PC-9 (cell line): ENCODE measurements at regions of chr14 and their contacts with region 1.

Region 1: GRCh38 chr14:76386915-76387782 is 11.2 kb downstream of the ESRRB start:
- DNase-seq: peak; percentile 55 to 87
- H3K4me3 ChIP-seq: no peak overlapping the region
- H3K27ac ChIP-seq: no peak overlapping the region
- H3K4me1 ChIP-seq: no peaks in the 10 kb centered on the region
- H3K27me3 ChIP-seq: peaks cover 97% of the 10 kb centered on the region
- CTCF ChIP-seq: peak; percentile 100

Region 2: DNA sequence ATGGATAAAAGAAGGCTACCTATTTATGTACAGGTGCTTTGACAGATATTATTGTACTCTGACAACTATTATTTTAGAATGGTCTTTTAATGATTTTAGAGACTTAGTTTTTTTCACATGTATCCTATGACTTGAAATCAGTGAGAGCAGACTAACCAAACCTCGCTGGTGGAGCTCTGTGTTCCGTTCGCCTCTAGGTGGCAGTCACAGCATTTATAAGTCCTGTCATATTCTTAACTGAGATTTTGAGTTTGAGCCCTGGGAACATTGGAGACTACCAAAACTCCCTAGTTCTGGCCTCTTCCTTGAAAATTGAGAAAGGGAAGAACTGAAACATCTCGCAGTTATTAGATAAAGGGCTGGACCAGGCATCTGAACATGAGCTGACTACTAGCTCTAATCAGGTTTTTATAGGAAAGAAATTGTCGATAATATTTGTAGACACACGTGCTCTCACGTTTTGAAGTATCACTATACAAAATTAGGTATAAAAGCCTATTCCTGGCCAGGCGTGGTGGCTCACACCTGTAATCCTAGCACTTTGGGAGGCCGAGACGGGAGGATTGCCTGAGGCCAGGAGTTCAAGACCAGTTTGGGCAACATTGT is 677.8 kb before region 1 on chr14:
- CTCF ChIA-PET with region 1: no interaction called
- POLR2A ChIA-PET with region 1: interaction called, 3 read pairs
- intact Hi-C with region 1: loop called (anchors 1 kb)
- DNase-seq: peak; percentile 49 to 58
- H3K4me3 ChIP-seq: no peak overlapping the region
- H3K27ac ChIP-seq: no peak overlapping the region
- H3K4me1 ChIP-seq: peaks cover 30% of the 10 kb centered on the region
- H3K27me3 ChIP-seq: no peaks in the 10 kb centered on the region
- CTCF ChIP-seq: peak; percentile 87

Region 3: GRCh38 chr14:75906676-75907280 is 480.4 kb before region 1 on chr14:
- CTCF ChIA-PET with region 1: interaction called, 3 read pairs
- POLR2A ChIA-PET with region 1: no interaction called
- intact Hi-C with region 1: loop called (anchors 5 kb)
- DNase-seq: peak; percentile 60 to 64
- H3K4me3 ChIP-seq: no peak overlapping the region
- H3K27ac ChIP-seq: no peak overlapping the region
- H3K4me1 ChIP-seq: no peaks in the 10 kb centered on the region
- H3K27me3 ChIP-seq: no peaks in the 10 kb centered on the region
- CTCF ChIP-seq: peak; percentile 100

Region 4: GRCh38 chr14:76050797-76051392 is 336.3 kb before region 1 on chr14:
- CTCF ChIA-PET with region 1: interaction called, 5 read pairs
- POLR2A ChIA-PET with region 1: no interaction called
- intact Hi-C with region 1: loop called (anchors 1 kb)
- DNase-seq: peak; percentile 59 to 64
- H3K4me3 ChIP-seq: no peak overlapping the region
- H3K27ac ChIP-seq: no peak overlapping the region
- H3K4me1 ChIP-seq: no peaks in the 10 kb centered on the region
- H3K27me3 ChIP-seq: no peaks in the 10 kb centered on the region
- CTCF ChIP-seq: peak; percentile 99

Region 5: DNA sequence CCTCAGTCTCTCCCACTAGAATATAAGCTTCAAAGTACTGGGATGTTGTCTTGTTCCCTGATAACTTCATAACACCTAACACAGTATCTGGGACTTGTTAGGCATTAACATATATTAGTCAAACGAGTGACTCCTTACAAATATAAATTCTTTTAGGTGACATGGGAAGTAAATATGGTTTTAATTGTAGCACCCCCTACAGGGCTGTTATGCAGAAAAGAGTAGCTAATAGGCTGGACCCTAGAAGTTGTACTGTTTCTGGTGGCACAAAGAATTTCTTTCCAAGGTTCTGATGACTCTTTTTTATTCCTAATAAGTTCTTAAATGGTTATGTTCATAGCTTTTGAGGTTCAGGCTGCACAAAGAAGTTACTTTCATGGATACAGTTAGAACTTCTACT is 205.6 kb before region 1 on chr14:
- CTCF ChIA-PET with region 1: no interaction called
- POLR2A ChIA-PET with region 1: no interaction called
- intact Hi-C with region 1: no loop called
- DNase-seq: no peak
- H3K4me3 ChIP-seq: no peak overlapping the region
- H3K27ac ChIP-seq: no peak overlapping the region
- H3K4me1 ChIP-seq: no peaks in the 10 kb centered on the region
- H3K27me3 ChIP-seq: no peaks in the 10 kb centered on the region
- CTCF ChIP-seq: peak; percentile 62

Region 6: DNA sequence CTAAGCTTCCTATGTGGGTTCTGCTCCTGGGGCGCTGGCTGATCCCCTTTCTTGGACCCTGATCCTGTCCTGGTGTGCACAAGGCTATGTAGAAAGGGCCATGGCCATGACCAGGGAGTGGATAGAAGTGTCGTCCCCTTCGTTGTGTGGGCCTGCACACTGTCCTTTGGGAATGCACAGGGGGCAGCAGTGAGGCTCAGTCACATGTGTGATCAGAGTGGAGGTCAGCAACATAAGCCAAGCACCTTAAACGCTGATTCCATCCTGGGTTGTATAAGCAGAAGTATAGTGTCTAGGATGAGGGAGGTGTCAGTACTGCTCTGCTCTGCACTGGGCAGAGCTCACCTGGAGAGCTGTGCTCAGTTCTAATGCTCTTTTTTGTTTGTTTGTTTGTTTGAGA is 37.2 kb after region 1 on chr14:
- CTCF ChIA-PET with region 1: no interaction called
- POLR2A ChIA-PET with region 1: no interaction called
- intact Hi-C with region 1: no loop called
- DNase-seq: no peak
- H3K4me3 ChIP-seq: no peak overlapping the region
- H3K27ac ChIP-seq: no peak overlapping the region
- H3K4me1 ChIP-seq: no peaks in the 10 kb centered on the region
- H3K27me3 ChIP-seq: peaks cover 93% of the 10 kb centered on the region
- CTCF ChIP-seq: no peak

Region 7: DNA sequence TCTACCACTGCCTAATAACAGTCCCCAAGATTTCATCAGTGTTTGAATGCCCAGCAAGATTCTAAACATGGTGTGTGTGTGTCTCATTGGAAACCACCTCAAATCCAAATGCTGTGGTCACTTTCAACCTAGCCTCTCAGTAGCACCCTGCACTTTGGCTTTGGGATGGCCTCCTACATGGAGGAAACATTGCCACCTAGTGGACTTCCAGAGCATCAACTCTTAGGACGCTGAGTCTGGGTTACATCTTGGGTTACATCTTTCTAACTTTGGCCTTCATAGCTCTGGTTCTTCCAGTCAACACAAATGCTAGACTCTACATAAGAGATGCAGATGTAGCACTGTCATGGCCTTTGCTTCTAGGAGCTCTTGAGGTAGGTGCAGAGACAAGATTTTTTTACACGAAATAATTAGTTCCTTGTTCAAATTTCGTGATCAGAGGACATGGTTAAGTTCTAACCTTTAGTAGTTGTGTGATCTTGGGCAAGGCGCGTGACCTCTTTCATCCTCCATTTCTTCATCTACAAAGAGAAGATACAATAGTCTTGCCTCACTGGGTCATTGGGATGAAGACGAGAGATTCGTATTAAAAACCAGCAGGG is 260.6 kb after region 1 on chr14:
- CTCF ChIA-PET with region 1: interaction called, 3 read pairs
- POLR2A ChIA-PET with region 1: no interaction called
- intact Hi-C with region 1: loop called (anchors 10 kb)
- DNase-seq: peak; percentile 47 to 52
- H3K4me3 ChIP-seq: no peak overlapping the region
- H3K27ac ChIP-seq: no peak overlapping the region
- H3K4me1 ChIP-seq: no peaks in the 10 kb centered on the region
- H3K27me3 ChIP-seq: peaks cover 89% of the 10 kb centered on the region
- CTCF ChIP-seq: peak; percentile 95

Region 8: DNA sequence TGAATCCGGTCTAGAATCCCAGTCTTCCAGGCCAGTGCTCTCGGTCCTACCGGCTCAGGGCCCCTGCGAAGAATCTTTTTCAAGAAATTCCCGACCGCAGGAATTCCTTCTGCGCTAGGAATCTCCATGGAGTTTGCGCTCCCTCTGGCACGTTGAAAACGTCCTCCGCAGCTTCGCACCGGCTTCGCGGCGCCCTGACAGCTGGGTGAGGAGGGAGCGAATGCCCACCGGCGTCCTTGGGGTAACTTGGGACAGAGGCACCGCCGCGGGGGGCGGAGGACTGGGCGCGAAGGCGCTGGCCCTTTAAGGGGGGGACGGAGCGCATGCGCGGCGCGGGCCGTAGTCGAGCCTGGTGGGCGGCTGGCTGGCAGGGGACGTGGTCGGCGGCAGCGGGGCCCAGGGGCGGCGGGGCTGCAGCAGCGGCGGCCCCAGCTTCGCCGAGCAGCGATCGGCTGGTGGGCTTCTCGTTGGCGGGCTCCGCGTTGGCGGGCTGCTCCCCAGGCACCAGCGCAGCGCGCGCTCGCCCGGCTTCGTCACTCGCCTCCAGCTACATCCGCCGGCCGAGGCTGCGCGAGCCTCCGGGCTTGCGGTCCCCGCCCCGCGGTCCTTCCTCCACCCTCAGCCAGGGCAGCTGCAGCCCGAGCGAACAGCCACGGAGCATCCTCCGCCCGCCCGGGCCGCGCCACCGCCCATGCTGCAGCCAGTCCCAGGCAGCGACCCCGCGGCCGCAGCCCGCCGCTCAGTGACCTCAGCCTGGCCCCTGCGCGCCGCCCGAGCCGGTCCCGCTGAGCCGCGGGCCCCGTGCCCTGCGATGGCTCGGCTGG is 374.2 kb after region 1 on chr14 and contains the start of gene VASH1:
- CTCF ChIA-PET with region 1: no interaction called
- POLR2A ChIA-PET with region 1: no interaction called
- intact Hi-C with region 1: loop called (anchors 10 kb)
- DNase-seq: peak in 1 of 2 experiments; percentile 87
- H3K4me3 ChIP-seq: peak within 1 kb of the TSS; percentile 12; the same call in 1 of the 2 replicates
- H3K27ac ChIP-seq: no peak within 1 kb of the TSS
- H3K4me1 ChIP-seq: no peaks in the 10 kb centered on the region
- H3K27me3 ChIP-seq: peaks cover 99% of the 10 kb centered on the region
- CTCF ChIP-seq: no peak
- total RNA-seq, gene VASH1: 4.3 and 7.4 TPM in 2 replicates